HCT116 (cell line): ENCODE measurements at regions of chr6 and their contacts with region 1.

Region 1: DNA sequence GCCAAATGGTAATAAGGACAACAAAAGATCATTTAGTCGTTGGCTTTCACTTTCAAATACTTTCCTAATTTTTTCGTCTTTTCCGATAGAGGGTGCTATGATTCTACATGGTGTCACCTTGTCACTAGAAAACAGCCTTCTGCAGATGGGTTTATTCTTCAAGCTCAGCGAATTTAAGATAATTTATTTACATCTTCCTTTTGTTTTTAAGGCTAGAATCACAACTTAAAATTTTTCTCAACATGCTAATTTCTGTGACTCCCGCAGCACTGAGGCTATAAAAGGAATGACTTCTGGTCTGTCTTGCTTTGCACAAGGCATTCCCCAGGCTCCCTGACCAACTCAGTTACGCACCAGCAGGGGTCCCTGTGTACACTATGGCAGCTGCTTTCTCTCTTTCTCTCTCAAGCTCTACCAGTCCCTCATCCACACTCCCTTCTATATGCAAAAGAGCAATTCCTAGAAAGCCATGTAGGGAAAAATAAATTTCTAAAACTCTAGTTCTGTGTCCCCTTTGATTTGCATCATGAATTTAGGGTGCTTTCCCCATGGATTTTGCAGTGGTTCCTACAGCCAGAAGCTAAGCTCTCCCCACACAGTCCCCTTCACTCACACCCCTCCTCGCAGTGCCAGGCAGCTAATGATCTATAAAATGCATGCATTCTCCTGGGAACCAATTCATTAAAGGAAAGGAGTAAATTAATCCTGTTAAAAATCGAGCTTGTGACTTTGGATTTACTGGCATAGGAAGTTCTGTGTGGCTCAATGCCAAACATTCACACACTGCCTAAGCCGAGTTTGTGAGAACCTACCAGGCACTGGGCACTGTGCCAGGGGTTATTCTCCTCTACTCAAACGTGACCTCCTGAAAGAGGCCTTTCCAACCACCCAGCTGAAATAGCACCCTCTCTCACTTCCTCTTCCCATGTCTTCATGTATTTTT is 74.5 kb downstream of the DCDC2 start:
- DNase-seq: peak; percentile 65
- ATAC-seq: peak; percentile 97
- H3K4me3 ChIP-seq: peak overlapping the region; percentile 12; a peak in 3 of 4 replicates
- H3K27ac ChIP-seq: no peak overlapping the region
- H3K4me1 ChIP-seq: peaks cover 4 to 6% of the 10 kb centered on the region in 2 experiments; a peak in 2 of 4 replicates
- H3K27me3 ChIP-seq: peaks cover 10% of the 10 kb centered on the region; the same call in 1 of the 2 replicates
- CTCF ChIP-seq: peak; percentile 71 to 97 (median 72)
- POLR2A ChIP-seq: no peak
- RAD21 ChIP-seq: peak; percentile 72

Region 2: DNA sequence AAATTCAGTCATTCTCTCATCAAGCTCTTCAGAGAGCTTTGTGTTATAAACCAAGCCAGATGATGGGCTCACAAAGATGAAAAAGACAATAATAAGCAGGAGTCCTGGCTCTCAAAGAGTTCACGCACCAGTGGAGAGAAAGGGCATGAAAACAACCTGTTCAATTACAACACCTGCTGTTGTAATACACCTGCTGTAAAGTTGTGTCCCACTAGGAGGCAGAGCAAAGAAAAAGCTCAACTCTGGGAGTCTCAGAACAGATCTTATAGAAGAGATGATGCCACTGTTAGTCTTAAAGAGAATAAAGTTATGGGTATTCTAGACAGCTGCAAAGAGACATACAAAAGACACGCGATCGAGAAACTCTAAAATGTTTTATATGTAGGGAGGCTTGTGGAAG is 26.0 kb before region 1 on chr6:
- CTCF ChIA-PET with region 1: interaction called, 11 read pairs
- POLR2A ChIA-PET with region 1: no interaction called
- RAD21 ChIA-PET with region 1: no interaction called
- intact Hi-C with region 1: no loop called
- DNase-seq: peak; percentile 13
- ATAC-seq: peak; percentile 70
- H3K4me3 ChIP-seq: no peak overlapping the region
- H3K27ac ChIP-seq: no peak overlapping the region
- H3K4me1 ChIP-seq: no peaks in the 10 kb centered on the region
- H3K27me3 ChIP-seq: no peaks in the 10 kb centered on the region
- CTCF ChIP-seq: peak in 2 of 3 experiments; percentile 39 to 41; a peak in 3 of 6 replicates
- POLR2A ChIP-seq: no peak
- RAD21 ChIP-seq: no peak

Region 3: DNA sequence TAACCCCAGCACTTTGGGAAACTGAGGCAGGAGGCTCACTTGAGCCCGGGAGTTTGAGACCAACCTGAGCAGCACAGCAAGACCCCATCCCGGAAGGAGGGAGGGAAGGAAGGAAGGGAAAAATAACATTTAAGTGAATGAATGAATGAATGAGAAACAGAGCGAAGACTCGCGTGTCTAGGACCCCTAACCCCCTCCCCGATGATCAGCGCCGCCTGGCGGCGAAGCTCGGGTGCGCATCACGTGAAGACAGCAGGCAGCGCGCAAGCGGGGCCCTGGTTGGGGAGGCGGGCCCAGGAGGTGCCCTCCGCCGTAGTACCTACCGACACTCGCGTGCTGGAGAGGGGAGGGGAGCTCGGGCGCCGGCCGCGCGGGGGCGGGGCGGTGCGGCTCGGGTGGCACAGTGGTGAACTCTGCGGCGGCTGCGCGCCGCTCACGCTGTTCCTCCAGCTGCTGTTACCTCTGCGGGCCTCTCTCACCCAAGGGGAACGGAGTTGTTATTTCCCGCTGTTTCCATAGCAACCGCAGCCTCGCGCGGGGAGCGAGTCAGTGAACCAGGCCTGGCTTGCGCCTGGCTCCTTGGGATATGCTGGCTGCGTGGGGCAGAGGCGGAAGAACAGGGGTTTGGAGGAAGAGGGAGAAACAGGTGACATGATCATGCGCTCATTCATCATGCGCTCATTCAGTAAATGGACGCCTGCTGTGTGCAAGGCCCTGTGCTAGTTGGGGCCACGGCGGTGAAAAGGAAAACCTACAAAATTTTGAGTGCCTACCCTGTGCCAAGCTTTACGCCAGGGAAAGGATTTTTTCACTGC is 76.5 kb after region 1 on chr6:
- CTCF ChIA-PET with region 1: interaction called, 17 read pairs
- POLR2A ChIA-PET with region 1: no interaction called
- RAD21 ChIA-PET with region 1: no interaction called
- intact Hi-C with region 1: loop called (anchors 1 kb)
- DNase-seq: peak; percentile 71
- ATAC-seq: peak; percentile 99
- H3K4me3 ChIP-seq: peak overlapping the region; percentile 35 to 56
- H3K27ac ChIP-seq: no peak overlapping the region
- H3K4me1 ChIP-seq: peaks cover 3 to 12% of the 10 kb centered on the region in 2 experiments; a peak in 3 of 4 replicates
- H3K27me3 ChIP-seq: no peaks in the 10 kb centered on the region
- CTCF ChIP-seq: peak; percentile 63 to 93 (median 92)
- POLR2A ChIP-seq: no peak
- RAD21 ChIP-seq: peak; percentile 40

Region 4: GRCh38 chr6:24387818-24388217 is 104.5 kb after region 1 on chr6:
- CTCF ChIA-PET with region 1: interaction called, 61 read pairs
- POLR2A ChIA-PET with region 1: interaction called, 3 read pairs
- RAD21 ChIA-PET with region 1: interaction called, 11 to 15 read pairs
- intact Hi-C with region 1: loop called (anchors 1 kb)
- DNase-seq: no peak
- ATAC-seq: no peak
- H3K4me3 ChIP-seq: no peak overlapping the region
- H3K27ac ChIP-seq: no peak overlapping the region
- H3K4me1 ChIP-seq: peaks cover 0 to 5% of the 10 kb centered on the region in 2 experiments; a peak in 2 of 4 replicates
- H3K27me3 ChIP-seq: no peaks in the 10 kb centered on the region
- CTCF ChIP-seq: no peak
- POLR2A ChIP-seq: no peak
- RAD21 ChIP-seq: no peak

Region 5: DNA sequence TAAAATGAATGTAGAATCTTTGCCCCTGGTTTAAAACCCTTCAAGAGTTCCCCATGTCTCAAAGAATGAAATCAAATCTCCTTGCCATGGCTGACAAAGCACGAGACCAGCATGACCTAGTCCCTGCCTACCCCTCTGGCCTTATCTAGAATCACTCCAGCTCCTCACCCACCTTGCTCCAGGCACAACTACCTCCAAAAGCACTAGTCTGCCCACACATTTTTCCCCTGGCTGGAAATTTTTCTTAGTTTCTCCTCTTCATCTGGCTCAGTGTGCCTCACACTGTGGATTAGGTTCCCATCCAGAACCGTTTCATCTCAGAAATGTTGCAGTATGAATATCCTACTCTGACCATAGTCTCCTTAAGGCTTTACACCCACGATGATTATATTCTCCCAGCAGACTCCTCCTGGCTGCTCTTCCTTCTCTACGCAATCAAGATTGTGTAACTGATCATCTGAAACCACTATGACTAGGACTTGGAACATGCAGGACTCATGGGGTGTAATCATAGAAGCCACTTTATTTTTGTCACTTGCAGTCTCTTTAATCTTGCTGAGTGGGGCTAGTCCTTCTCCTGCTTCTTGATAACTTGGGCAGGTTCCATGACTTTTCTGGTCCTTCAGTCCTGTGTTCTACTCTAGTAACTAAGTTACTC is 111.6 kb after region 1 on chr6:
- CTCF ChIA-PET with region 1: interaction called, 61 read pairs
- POLR2A ChIA-PET with region 1: no interaction called
- RAD21 ChIA-PET with region 1: interaction called, 11 to 15 read pairs
- intact Hi-C with region 1: no loop called
- DNase-seq: no peak
- ATAC-seq: no peak
- H3K4me3 ChIP-seq: no peak overlapping the region
- H3K27ac ChIP-seq: no peak overlapping the region
- H3K4me1 ChIP-seq: no peaks in the 10 kb centered on the region
- H3K27me3 ChIP-seq: no peaks in the 10 kb centered on the region
- CTCF ChIP-seq: no peak
- POLR2A ChIP-seq: no peak
- RAD21 ChIP-seq: no peak

Region 6: GRCh38 chr6:24504602-24505586 is 221.6 kb after region 1 on chr6:
- CTCF ChIA-PET with region 1: no interaction called
- POLR2A ChIA-PET with region 1: no interaction called
- RAD21 ChIA-PET with region 1: no interaction called
- intact Hi-C with region 1: no loop called
- DNase-seq: no peak
- ATAC-seq: no peak
- H3K4me3 ChIP-seq: no peak overlapping the region
- H3K27ac ChIP-seq: no peak overlapping the region
- H3K4me1 ChIP-seq: no peaks in the 10 kb centered on the region; a peak in 1 of 4 replicates
- H3K27me3 ChIP-seq: no peaks in the 10 kb centered on the region
- CTCF ChIP-seq: no peak
- POLR2A ChIP-seq: no peak
- RAD21 ChIP-seq: no peak

Region 7: DNA sequence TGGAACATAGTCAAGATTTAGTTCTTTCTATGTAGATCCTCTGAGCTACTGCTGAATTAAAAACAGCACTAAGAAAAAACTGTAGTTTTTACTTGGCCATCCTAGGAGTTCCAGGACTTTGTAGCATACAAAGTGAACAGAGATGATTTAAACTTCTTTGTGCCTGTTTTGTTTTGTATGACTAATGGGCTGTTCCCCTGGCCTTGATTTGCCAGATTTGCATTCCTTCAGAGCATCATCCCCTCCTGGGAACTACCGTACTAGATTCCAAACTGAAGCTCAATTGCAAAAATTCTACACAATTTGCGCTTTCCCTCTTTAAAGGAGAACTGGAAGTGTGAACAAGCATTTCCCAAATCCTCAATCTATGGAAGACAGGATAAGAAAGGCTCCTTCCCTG is 406.6 kb after region 1 on chr6:
- CTCF ChIA-PET with region 1: no interaction called
- POLR2A ChIA-PET with region 1: no interaction called
- RAD21 ChIA-PET with region 1: no interaction called
- intact Hi-C with region 1: loop called (anchors 1 kb)
- DNase-seq: no peak
- ATAC-seq: no peak
- H3K4me3 ChIP-seq: no peak overlapping the region
- H3K27ac ChIP-seq: no peak overlapping the region
- H3K4me1 ChIP-seq: no peaks in the 10 kb centered on the region
- H3K27me3 ChIP-seq: no peaks in the 10 kb centered on the region
- CTCF ChIP-seq: no peak
- POLR2A ChIP-seq: no peak
- RAD21 ChIP-seq: no peak